ENCODE measurements at regions of chr22 and their contacts with region 1.

Region 1: DNA sequence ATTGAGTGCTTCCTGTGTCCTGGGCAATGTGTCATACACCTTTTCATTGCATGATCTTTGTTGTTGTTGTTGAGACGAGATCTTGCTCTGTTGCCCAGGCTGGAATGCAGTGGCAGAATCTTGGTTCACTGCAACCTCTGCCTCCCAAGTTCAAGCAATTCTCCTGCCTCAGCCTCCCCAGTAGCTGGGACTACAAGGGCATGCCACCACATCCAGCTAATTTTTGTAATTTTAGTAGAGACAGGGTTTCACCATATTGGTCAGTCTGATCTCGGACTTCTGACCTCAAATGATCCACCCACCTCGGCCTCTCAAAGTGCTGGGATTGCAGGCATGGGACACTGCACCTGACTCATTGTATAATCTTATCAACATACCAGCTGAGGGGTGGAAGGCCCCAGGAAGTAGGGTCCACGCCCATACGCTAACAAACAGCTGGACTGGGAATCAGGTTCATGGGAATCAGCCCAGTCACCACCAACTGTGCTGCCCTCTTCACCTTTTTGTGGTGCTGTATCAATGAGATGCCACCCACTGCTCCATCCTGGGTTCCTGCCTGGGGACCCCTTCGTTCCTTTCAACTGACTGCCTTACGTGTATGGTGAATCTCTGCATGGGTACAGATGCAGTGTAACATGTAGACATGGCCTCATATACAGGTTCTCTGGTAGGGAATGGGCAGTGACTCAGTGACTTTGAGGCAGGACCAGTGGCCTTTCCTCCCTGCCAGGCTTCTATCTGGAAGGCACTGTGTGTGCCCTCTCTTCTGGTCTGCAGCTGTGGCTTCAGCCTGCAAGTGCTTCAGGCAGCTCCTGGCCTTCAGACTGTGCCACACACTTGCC is 32.5 kb upstream of the YWHAH start:
- DNase-seq: no peak
- H3K4me3 ChIP-seq: no peak overlapping the region
- H3K27ac ChIP-seq: no peak overlapping the region
- H3K4me1 ChIP-seq: no peaks in the 10 kb centered on the region
- H3K27me3 ChIP-seq: no peaks in the 10 kb centered on the region
- CTCF ChIP-seq: no peak

Region 2: DNA sequence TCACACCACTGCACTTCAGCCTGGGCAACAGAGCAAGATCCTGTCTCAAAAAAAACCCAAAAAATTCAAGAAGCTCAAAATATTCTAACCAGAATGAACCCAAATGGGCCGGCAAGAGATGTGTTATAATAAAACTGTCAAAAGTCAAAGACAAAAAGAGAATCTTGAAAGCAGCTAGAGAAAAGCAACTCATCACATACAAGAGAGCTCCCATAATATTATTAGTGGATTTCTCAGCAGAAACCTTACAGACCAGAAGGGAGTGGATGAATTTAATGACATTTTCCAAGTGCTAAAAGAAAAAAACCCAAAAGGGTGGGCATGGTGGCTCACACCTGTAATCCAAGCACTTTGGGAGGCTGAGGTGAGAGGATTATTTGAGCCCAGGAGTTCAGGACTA is 1854.4 kb before region 1 on chr22:
- CTCF ChIA-PET with region 1: no interaction called
- POLR2A ChIA-PET with region 1: interaction called, 13 read pairs
- intact Hi-C with region 1: no loop called
- DNase-seq: no peak
- H3K4me3 ChIP-seq: no peak overlapping the region
- H3K27ac ChIP-seq: no peak overlapping the region
- H3K4me1 ChIP-seq: no peaks in the 10 kb centered on the region
- H3K27me3 ChIP-seq: no peaks in the 10 kb centered on the region
- CTCF ChIP-seq: no peak